Activated naive CD4-positive, alpha-beta T cell treated with anti-CD3 and anti-CD28 coated beads for 36 hours (primary cell): ENCODE measurements at regions of chr18 and their contacts with region 1.

Region 1: GRCh38 chr18:67217551-67218166 is 298.9 kb downstream of the DSEL start:
- DNase-seq: peak; percentile 73
- H3K4me3 Mint-ChIP-seq: no peak overlapping the region
- H3K27ac Mint-ChIP-seq: no peak overlapping the region
- H3K4me1 Mint-ChIP-seq: peaks cover 2% of the 10 kb centered on the region
- H3K27me3 Mint-ChIP-seq: no peaks in the 10 kb centered on the region

Region 2: DNA sequence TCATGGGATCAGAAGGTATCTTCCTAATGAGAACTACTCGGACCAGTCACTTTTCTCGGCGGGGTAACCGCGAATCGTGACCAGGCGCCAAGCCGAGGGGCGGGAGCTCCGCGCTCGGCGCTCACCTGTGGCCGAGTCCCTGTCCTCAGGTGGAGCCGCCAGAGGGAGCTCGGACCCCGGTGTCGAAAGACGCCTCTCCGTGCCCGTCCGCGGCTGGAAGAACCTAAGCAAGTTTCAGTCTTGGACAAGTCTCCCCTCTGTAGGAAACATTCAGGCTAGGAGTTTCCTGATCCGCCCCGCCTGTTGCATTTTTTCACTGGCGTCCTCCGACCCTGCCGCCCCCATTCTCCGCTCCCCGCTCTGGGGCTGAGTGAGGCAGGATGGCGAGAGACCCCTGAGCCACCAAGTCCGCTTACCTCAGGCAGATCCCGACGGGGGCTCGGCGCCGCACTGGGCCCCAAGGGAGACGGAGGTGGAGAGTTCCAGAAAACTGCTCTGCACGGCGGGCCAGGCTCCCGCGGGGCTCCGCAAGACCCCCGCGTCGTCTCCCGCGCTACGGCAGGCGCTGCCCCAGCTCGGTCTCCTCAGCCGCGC is 298.4 kb after region 1 on chr18:
- CTCF ChIA-PET with region 1: interaction called, 10 read pairs
- intact Hi-C with region 1: loop called (anchors 1 kb)
- DNase-seq: peak; percentile 77
- H3K4me3 Mint-ChIP-seq: peak overlapping the region; percentile 73
- H3K27ac Mint-ChIP-seq: no peak overlapping the region
- H3K4me1 Mint-ChIP-seq: peaks cover 21% of the 10 kb centered on the region
- H3K27me3 Mint-ChIP-seq: peaks cover 7% of the 10 kb centered on the region

Region 3: DNA sequence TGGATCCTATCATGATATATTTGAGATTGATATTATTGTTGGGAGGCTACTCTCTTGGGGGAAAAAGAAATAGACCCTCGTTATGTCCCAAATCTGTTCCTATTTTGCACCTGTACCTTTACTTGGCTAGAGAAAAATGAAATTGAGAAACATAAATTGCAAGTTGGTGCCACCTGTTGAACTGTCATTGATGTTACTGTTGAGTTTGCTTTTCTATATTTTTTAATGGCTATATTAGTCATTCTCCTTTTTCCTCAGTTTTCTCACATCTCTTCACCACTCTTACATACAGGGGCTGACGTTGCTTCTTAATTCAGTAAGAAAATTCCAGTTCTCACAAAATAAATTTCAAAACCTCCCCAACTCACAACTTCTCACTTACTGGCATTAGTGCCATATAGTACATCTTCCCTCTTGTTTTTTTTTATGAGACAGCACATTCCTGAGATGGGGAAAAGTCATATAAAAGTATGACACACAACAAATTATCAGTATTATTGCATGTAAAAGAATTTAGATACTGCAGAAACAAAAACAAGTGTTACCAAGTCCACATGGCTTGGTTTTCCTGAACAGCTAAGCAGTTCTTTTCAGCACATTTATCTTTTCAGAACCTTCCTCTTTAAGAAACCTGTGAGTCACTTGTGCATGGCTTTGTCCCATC is 647.1 kb after region 1 on chr18:
- CTCF ChIA-PET with region 1: no interaction called
- intact Hi-C with region 1: loop called (anchors 10 kb)
- DNase-seq: no peak
- H3K4me3 Mint-ChIP-seq: no peak overlapping the region
- H3K27ac Mint-ChIP-seq: no peak overlapping the region
- H3K4me1 Mint-ChIP-seq: no peaks in the 10 kb centered on the region
- H3K27me3 Mint-ChIP-seq: no peaks in the 10 kb centered on the region

Region 4: GRCh38 chr18:67935638-67936037 is 718.0 kb after region 1 on chr18:
- CTCF ChIA-PET with region 1: no interaction called
- intact Hi-C with region 1: no loop called
- DNase-seq: no peak
- H3K4me3 Mint-ChIP-seq: no peak overlapping the region
- H3K27ac Mint-ChIP-seq: no peak overlapping the region
- H3K4me1 Mint-ChIP-seq: no peaks in the 10 kb centered on the region
- H3K27me3 Mint-ChIP-seq: no peaks in the 10 kb centered on the region

Region 5: DNA sequence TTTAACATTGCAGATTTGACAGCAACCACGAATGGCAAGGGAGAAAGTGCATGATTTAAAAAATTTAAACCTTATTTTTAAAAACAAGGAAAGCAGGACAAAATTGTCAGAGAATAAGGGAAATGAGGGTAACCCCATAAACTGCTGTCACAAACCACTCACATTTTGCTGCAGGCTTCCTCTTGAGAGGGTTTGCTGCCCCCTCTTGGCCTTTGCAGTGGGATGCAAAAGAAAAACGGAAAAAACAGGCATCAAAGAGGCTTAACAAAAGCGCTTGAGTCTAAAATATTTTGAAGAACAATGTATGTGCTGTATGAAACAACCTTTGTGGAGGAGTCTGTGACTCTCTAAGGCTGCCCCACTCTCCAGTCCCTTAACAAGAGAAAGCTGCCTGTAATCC is 1405.7 kb after region 1 on chr18:
- CTCF ChIA-PET with region 1: no interaction called
- intact Hi-C with region 1: loop called (anchors 1 kb)
- DNase-seq: peak; percentile 51
- H3K4me3 Mint-ChIP-seq: no peak overlapping the region
- H3K27ac Mint-ChIP-seq: no peak overlapping the region
- H3K4me1 Mint-ChIP-seq: no peaks in the 10 kb centered on the region
- H3K27me3 Mint-ChIP-seq: peaks cover 5% of the 10 kb centered on the region

Region 6: DNA sequence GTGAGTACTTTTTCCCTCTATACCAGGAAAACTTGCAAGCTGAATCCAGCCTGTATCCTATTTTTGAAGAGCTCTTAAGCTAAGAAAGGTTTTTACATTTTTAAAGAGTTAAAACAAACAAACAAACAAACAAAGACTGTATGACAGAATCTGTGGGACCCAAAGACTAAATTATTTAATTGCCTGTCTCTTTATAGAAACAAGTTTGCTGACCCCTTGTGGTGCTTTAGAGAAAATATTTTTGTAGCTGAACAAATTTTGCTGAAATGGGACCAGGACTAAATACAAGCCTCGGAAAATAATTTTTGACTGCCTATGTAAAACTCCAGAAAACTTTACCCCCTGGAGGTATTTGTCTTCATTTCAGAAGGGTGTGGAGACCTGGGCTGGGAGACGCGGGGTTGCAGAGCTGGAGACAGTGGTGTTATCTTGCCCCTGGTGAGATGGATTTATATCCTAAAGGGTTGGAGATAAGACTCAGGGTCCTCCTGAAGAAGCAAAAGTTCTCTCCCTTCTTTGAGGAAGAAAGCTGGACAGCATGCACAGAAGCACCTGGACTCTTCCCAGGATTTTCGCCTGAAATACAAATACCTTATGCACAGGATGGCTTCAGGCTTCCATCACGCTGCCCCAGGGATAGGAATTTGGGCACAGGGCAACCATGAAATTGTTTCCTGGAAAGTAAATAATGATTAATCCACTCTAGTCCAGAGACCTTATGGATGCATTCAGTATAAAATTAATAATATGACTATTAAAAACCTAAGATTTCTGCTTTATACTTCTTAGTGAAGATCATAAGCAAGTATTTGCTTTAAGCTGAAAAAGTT is 1442.9 kb after region 1 on chr18:
- CTCF ChIA-PET with region 1: interaction called, 4 read pairs
- intact Hi-C with region 1: loop called (anchors 1 kb)
- DNase-seq: no peak
- H3K4me3 Mint-ChIP-seq: no peak overlapping the region
- H3K27ac Mint-ChIP-seq: no peak overlapping the region
- H3K4me1 Mint-ChIP-seq: no peaks in the 10 kb centered on the region
- H3K27me3 Mint-ChIP-seq: no peaks in the 10 kb centered on the region

Region 7: GRCh38 chr18:68735483-68736343 is 1518.1 kb after region 1 on chr18:
- CTCF ChIA-PET with region 1: no interaction called
- intact Hi-C with region 1: loop called (anchors 1 kb)
- DNase-seq: peak; percentile 11
- H3K4me3 Mint-ChIP-seq: no peak overlapping the region
- H3K27ac Mint-ChIP-seq: no peak overlapping the region
- H3K4me1 Mint-ChIP-seq: no peaks in the 10 kb centered on the region
- H3K27me3 Mint-ChIP-seq: no peaks in the 10 kb centered on the region

Region 8: GRCh38 chr18:68840554-68841263 is 1623.0 kb after region 1 on chr18:
- CTCF ChIA-PET with region 1: no interaction called
- intact Hi-C with region 1: loop called (anchors 5 kb)
- DNase-seq: no peak
- H3K4me3 Mint-ChIP-seq: no peak overlapping the region
- H3K27ac Mint-ChIP-seq: no peak overlapping the region
- H3K4me1 Mint-ChIP-seq: no peaks in the 10 kb centered on the region
- H3K27me3 Mint-ChIP-seq: no peaks in the 10 kb centered on the region